GM12878 (cell line): ENCODE measurements at regions of chr3 and their contacts with region 1.

Region 1: GRCh38 chr3:5026331-5027218 is 47.3 kb downstream of the BHLHE40 start:
- DNase-seq: no peak
- ATAC-seq: peak; percentile 83
- H3K4me3 ChIP-seq: peak overlapping the region; percentile 61; the same call in 1 of the 2 replicates
- H3K27ac ChIP-seq: peak overlapping the region; percentile 68
- H3K4me1 ChIP-seq: peaks cover 31% of the 10 kb centered on the region
- H3K27me3 ChIP-seq: no peaks in the 10 kb centered on the region
- CTCF ChIP-seq: peak; percentile 63 to 72 (median 71)
- EP300 ChIP-seq: no peak; a peak in 1 of 4 replicates
- POLR2A ChIP-seq: 0 out of 2 replicates have a peak, but pooled peaks have one; percentile 31
- RAD21 ChIP-seq: peak; percentile 86

Region 2: GRCh38 chr3:4834403-4834866 is 192.1 kb before region 1 on chr3:
- CTCF ChIA-PET with region 1: interaction called, 3 read pairs
- POLR2A ChIA-PET with region 1: interaction called, 4 read pairs
- RAD21 ChIA-PET with region 1: interaction called, 3 read pairs
- SMC1A ChIA-PET with region 1: no interaction called
- in situ Hi-C with region 1: no loop called
- intact Hi-C with region 1: loop called (anchors 5 kb)
- DNase-seq: no peak
- ATAC-seq: peak; percentile 63
- H3K4me3 ChIP-seq: no peak overlapping the region
- H3K27ac ChIP-seq: peak overlapping the region; percentile 43; the same call in 1 of the 2 replicates
- H3K4me1 ChIP-seq: peaks cover 43% of the 10 kb centered on the region
- H3K27me3 ChIP-seq: no peaks in the 10 kb centered on the region
- CTCF ChIP-seq: no peak
- EP300 ChIP-seq: peak; percentile 89 to 95; a peak in 3 of 4 replicates
- POLR2A ChIP-seq: no peak
- RAD21 ChIP-seq: 0 out of 2 replicates have a peak, but pooled peaks have one; percentile 4

Region 3: GRCh38 chr3:4898454-4899313 is 127.9 kb before region 1 on chr3:
- CTCF ChIA-PET with region 1: no interaction called
- POLR2A ChIA-PET with region 1: no interaction called
- RAD21 ChIA-PET with region 1: no interaction called
- SMC1A ChIA-PET with region 1: interaction called, 3 read pairs
- in situ Hi-C with region 1: no loop called
- intact Hi-C with region 1: loop called (anchors 2 kb)
- DNase-seq: peak; percentile 53
- ATAC-seq: peak; percentile 97
- H3K4me3 ChIP-seq: no peak overlapping the region; the same call in 1 of the 2 replicates
- H3K27ac ChIP-seq: peak overlapping the region; percentile 28
- H3K4me1 ChIP-seq: peaks cover 16% of the 10 kb centered on the region
- H3K27me3 ChIP-seq: no peaks in the 10 kb centered on the region
- CTCF ChIP-seq: no peak
- EP300 ChIP-seq: peak; percentile 69 to 91; a peak in 3 of 4 replicates
- POLR2A ChIP-seq: no peak
- RAD21 ChIP-seq: no peak

Region 4: DNA sequence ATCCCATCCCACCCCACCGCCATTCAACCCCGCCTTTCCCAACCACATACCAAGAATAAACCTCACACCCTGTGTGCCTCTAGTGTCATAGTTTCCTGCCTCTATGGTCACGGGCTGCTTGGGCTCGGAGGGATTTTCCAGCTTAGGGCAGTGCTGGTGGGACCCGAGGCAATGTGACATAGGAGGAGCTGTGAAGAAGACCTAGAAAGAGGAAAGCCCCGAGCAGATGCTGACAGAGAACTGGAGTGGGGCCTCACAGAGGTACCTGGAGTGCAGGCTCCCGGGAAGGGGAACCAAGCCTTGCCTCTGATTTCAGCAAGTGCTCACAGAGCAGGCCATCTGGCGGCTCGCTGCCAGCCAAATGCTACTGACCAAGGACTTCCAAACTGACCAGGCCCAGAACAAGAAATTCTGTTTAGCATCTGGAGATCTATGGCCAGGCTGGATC is 19.8 kb before region 1 on chr3:
- CTCF ChIA-PET with region 1: interaction called, 17 read pairs
- POLR2A ChIA-PET with region 1: interaction called, 48 read pairs
- RAD21 ChIA-PET with region 1: interaction called, 46 read pairs
- SMC1A ChIA-PET with region 1: interaction called, 84 read pairs
- in situ Hi-C with region 1: no loop called
- intact Hi-C with region 1: loop called (anchors 2 kb)
- DNase-seq: peak; percentile 95
- ATAC-seq: peak; percentile 78
- H3K4me3 ChIP-seq: 0 out of 2 replicates have a peak overlapping the region, but pooled peaks have one; percentile 26
- H3K27ac ChIP-seq: peak overlapping the region; percentile 94
- H3K4me1 ChIP-seq: peaks cover 53% of the 10 kb centered on the region
- H3K27me3 ChIP-seq: no peaks in the 10 kb centered on the region
- CTCF ChIP-seq: peak in 1 of 3 experiments; percentile 24; a peak in 2 of 6 replicates
- EP300 ChIP-seq: peak; percentile 98 to 99
- POLR2A ChIP-seq: peak; percentile 69; the same call in 1 of the 2 replicates
- RAD21 ChIP-seq: peak; percentile 30; the same call in 1 of the 2 replicates

Region 5: DNA sequence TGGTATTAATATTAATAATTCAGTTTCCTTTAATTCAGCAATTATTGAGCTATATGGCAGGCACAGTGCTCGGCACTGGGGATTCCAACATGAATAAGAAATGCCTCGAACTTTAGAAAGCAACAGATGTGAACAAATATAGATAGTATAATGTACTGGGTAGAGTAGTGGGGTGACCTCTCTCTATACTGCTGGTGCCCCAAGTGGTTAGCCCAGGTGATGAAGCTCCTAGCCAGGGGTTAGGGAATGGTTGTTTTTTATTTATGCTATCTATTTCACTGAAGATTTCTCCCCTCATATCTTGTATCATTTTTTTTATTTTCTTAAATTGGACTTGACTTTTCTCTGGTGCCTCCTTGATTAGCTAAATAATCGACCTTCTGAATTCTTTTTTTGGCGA is 14.7 kb after region 1 on chr3:
- CTCF ChIA-PET with region 1: interaction called, 25 read pairs
- POLR2A ChIA-PET with region 1: interaction called, 7 read pairs
- RAD21 ChIA-PET with region 1: interaction called, 8 read pairs
- SMC1A ChIA-PET with region 1: interaction called, 16 read pairs
- in situ Hi-C with region 1: no loop called
- intact Hi-C with region 1: no loop called
- DNase-seq: no peak
- ATAC-seq: peak; percentile 49
- H3K4me3 ChIP-seq: no peak overlapping the region
- H3K27ac ChIP-seq: no peak overlapping the region
- H3K4me1 ChIP-seq: peaks cover 9% of the 10 kb centered on the region
- H3K27me3 ChIP-seq: no peaks in the 10 kb centered on the region
- CTCF ChIP-seq: 0 out of 6 replicates have a peak, but pooled peaks of 1 of the 3 experiments have one; percentile 18
- EP300 ChIP-seq: no peak
- POLR2A ChIP-seq: no peak
- RAD21 ChIP-seq: no peak